CD4-positive, alpha-beta memory T cell (primary cell): ENCODE measurements at regions of chr19 and their contacts with region 1.

Region 1: GRCh38 chr19:6632002-6632621 is 37.8 kb downstream of the TNFSF14 start:
- DNase-seq: peak; percentile 78 to 86 (median 82)
- H3K4me3 ChIP-seq: no peak overlapping the region
- H3K4me3 Mint-ChIP-seq: no peak overlapping the region
- H3K27ac ChIP-seq: no peak overlapping the region
- H3K27ac Mint-ChIP-seq: peak overlapping the region in 3 of 7 donors; percentile 3 to 24 (median 22)
- H3K4me1 ChIP-seq: peaks cover 7% of the 10 kb centered on the region
- H3K4me1 Mint-ChIP-seq: peaks cover 8 to 15% (median 10%) of the 10 kb centered on the region in 4 donors
- H3K27me3 ChIP-seq: no peaks in the 10 kb centered on the region
- H3K27me3 Mint-ChIP-seq: peaks cover 1 to 2% of the 10 kb centered on the region in 2 donors

Region 2: GRCh38 chr19:6674868-6675305 is 42.8 kb after region 1 on chr19:
- CTCF ChIA-PET with region 1: interaction called, 9 read pairs
- POLR2A ChIA-PET with region 1: no interaction called
- intact Hi-C with region 1: loop called (anchors 2 kb)
- DNase-seq: peak; percentile 76 to 94 (median 81)
- H3K4me3 ChIP-seq: peak overlapping the region in 1 of 2 donors; percentile 44
- H3K4me3 Mint-ChIP-seq: peak overlapping the region; percentile 58 to 77 (median 72)
- H3K27ac ChIP-seq: peak overlapping the region; percentile 44
- H3K27ac Mint-ChIP-seq: peak overlapping the region; percentile 60 to 92 (median 81)
- H3K4me1 ChIP-seq: peaks cover 55% of the 10 kb centered on the region
- H3K4me1 Mint-ChIP-seq: peaks cover 39 to 82% (median 58%) of the 10 kb centered on the region in 4 donors
- H3K27me3 ChIP-seq: no peaks in the 10 kb centered on the region
- H3K27me3 Mint-ChIP-seq: no peaks in the 10 kb centered on the region